CD4-positive, alpha-beta memory T cell (primary cell): ENCODE measurements at regions of chr14 and their contacts with region 1.

Region 1: DNA sequence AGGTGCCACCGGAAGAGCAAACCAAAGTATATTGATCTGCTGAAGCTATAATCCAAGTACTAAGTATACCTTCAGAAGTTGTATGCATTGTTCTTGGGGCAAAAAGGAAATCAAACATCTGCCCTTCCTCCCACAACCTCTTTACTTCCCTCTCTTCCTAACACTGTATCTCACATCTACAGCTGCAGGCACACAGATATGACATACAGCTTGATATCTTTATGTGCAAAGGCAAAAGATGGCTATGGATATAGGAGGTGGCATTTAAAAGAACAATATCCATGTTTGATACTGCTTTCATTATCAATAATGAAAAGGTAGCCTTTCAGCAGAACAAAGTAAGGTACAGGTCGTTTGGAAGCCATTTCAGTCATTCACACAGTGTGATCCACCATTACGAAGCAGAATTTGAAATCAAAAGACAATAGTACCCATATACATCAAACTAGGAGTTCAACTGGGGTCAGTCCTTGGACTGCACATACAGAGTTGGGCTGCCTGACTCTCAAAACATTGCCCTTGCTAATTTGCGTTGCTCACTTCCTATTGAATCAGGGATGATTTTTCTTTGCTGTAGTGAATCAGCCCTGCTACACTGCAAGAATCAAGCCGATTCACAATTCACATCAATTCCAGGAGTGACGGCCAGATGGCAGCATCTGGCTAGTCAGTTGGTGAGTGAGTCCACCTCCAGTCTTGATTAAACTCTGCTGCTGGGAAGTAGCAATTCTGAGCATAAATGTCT is 8.9 kb downstream of the ANG start:
- DNase-seq: peak; percentile 55 to 65 (median 60)
- H3K4me3 ChIP-seq: no peak overlapping the region
- H3K4me3 Mint-ChIP-seq: no peak overlapping the region
- H3K27ac ChIP-seq: no peak overlapping the region
- H3K27ac Mint-ChIP-seq: no peak overlapping the region
- H3K4me1 ChIP-seq: no peaks in the 10 kb centered on the region
- H3K4me1 Mint-ChIP-seq: no peaks in the 10 kb centered on the region
- H3K27me3 ChIP-seq: no peaks in the 10 kb centered on the region
- H3K27me3 Mint-ChIP-seq: no peaks in the 10 kb centered on the region

Region 2: GRCh38 chr14:20477211-20477876 is 220.1 kb before region 1 on chr14:
- CTCF ChIA-PET with region 1: no interaction called
- POLR2A ChIA-PET with region 1: no interaction called
- intact Hi-C with region 1: no loop called
- DNase-seq: peak; percentile 55 to 67 (median 62)
- H3K4me3 ChIP-seq: peak overlapping the region in 1 of 2 donors; percentile 42
- H3K4me3 Mint-ChIP-seq: peak overlapping the region; percentile 66 to 87 (median 80)
- H3K27ac ChIP-seq: peak overlapping the region; percentile 51
- H3K27ac Mint-ChIP-seq: peak overlapping the region; percentile 84 to 97 (median 90)
- H3K4me1 ChIP-seq: peaks cover 98% of the 10 kb centered on the region
- H3K4me1 Mint-ChIP-seq: peaks cover 57 to 94% (median 76%) of the 10 kb centered on the region in 4 donors
- H3K27me3 ChIP-seq: no peaks in the 10 kb centered on the region
- H3K27me3 Mint-ChIP-seq: no peaks in the 10 kb centered on the region

Region 3: GRCh38 chr14:20723488-20723887 is 26.0 kb after region 1 on chr14:
- CTCF ChIA-PET with region 1: no interaction called
- POLR2A ChIA-PET with region 1: no interaction called
- intact Hi-C with region 1: no loop called
- DNase-seq: no peak
- H3K4me3 ChIP-seq: no peak overlapping the region
- H3K4me3 Mint-ChIP-seq: peak overlapping the region in 1 of 8 donors; percentile 13
- H3K27ac ChIP-seq: no peak overlapping the region
- H3K27ac Mint-ChIP-seq: no peak overlapping the region
- H3K4me1 ChIP-seq: no peaks in the 10 kb centered on the region
- H3K4me1 Mint-ChIP-seq: peaks cover 0 to 9% (median 2%) of the 10 kb centered on the region in 4 donors
- H3K27me3 ChIP-seq: peaks cover 5% of the 10 kb centered on the region
- H3K27me3 Mint-ChIP-seq: peaks cover 45 to 62% of the 10 kb centered on the region in 2 donors

Region 4: DNA sequence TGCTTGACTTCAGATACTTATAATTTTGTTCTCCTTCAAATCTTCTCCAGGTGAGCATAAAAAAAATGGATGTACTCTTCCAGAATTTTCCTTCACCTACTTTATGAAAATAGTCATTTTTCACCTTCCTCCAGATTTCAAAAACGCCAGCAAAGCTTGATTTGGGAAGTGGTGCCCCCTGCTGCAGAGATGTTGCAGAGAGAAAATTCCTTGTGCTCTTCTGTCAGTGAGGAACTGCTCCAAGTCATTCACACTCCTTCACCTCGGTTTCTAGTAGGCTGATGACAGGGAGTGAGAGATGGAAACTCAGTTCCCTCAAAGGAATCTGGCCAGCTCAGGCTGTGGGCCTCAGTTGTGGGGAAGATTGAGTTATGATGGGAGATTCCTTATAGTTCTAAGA is 169.5 kb after region 1 on chr14:
- CTCF ChIA-PET with region 1: interaction called, 30 read pairs
- POLR2A ChIA-PET with region 1: no interaction called
- intact Hi-C with region 1: no loop called
- DNase-seq: no peak
- H3K4me3 ChIP-seq: no peak overlapping the region
- H3K4me3 Mint-ChIP-seq: no peak overlapping the region
- H3K27ac ChIP-seq: no peak overlapping the region
- H3K27ac Mint-ChIP-seq: no peak overlapping the region
- H3K4me1 ChIP-seq: no peaks in the 10 kb centered on the region
- H3K4me1 Mint-ChIP-seq: no peaks in the 10 kb centered on the region
- H3K27me3 ChIP-seq: peaks cover 4% of the 10 kb centered on the region
- H3K27me3 Mint-ChIP-seq: peaks cover 12 to 32% of the 10 kb centered on the region in 2 donors

Region 5: DNA sequence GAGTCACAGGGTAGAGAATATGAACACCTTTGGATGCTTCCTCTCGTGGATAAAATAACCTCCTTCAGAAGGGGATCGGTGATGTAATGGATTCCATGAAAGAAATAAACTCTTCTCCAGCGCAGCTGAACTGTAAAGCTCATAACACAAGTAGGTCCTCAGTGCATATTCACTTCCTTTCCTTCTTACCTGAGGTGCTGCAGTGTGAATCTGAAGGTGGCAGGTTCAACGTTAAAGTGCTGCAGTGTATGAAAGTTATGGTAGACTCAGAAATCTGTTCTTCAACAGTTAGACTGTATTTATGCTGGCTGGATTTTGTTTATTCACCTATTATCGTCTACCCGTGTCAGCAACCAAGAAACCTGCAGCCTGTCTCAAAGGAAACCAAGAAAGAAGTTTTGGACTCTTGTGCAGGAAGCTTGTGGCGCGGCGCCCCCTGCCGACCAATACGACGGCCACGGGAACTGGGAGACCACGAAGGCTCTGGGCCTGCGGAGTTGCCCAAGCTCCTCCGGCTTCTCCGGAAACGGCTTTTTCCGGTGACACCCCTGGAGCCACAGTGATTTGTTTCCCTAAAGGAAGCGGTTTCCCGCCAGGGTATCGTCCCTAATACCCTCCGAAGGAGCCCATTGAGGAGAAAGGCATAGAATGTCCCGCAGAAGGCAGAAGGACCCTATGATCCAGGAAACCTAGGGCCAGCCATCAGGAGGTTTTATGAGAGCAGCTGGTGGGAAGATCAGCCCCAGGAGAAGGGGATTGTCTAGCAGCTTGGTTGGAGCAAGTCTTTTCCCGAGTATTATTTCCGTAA is 176.1 kb after region 1 on chr14:
- CTCF ChIA-PET with region 1: interaction called, 30 read pairs
- POLR2A ChIA-PET with region 1: interaction called, 3 read pairs
- intact Hi-C with region 1: loop called (anchors 1 kb)
- DNase-seq: peak; percentile 63 to 70 (median 66)
- H3K4me3 ChIP-seq: no peak overlapping the region
- H3K4me3 Mint-ChIP-seq: peak overlapping the region in 4 of 8 donors; percentile 17 to 60 (median 20)
- H3K27ac ChIP-seq: no peak overlapping the region
- H3K27ac Mint-ChIP-seq: peak overlapping the region in 1 of 7 donors; percentile 13
- H3K4me1 ChIP-seq: peaks cover 11% of the 10 kb centered on the region
- H3K4me1 Mint-ChIP-seq: peaks cover 5 to 16% (median 8%) of the 10 kb centered on the region in 4 donors
- H3K27me3 ChIP-seq: peaks cover 4% of the 10 kb centered on the region
- H3K27me3 Mint-ChIP-seq: peaks cover 6 to 12% of the 10 kb centered on the region in 2 donors

Region 6: GRCh38 chr14:20956376-20956976 is 259.0 kb after region 1 on chr14:
- CTCF ChIA-PET with region 1: interaction called, 10 read pairs
- POLR2A ChIA-PET with region 1: no interaction called
- intact Hi-C with region 1: no loop called
- DNase-seq: peak in 2 of 5 donors; percentile 9 to 10
- H3K4me3 ChIP-seq: no peak overlapping the region
- H3K4me3 Mint-ChIP-seq: peak overlapping the region in 2 of 8 donors; percentile 35 to 65
- H3K27ac ChIP-seq: no peak overlapping the region
- H3K27ac Mint-ChIP-seq: peak overlapping the region in 6 of 7 donors; percentile 17 to 75 (median 50)
- H3K4me1 ChIP-seq: peaks cover 9% of the 10 kb centered on the region
- H3K4me1 Mint-ChIP-seq: peaks cover 8 to 14% (median 11%) of the 10 kb centered on the region in 4 donors
- H3K27me3 ChIP-seq: no peaks in the 10 kb centered on the region
- H3K27me3 Mint-ChIP-seq: peaks cover 5 to 10% of the 10 kb centered on the region in 2 donors